ENCODE measurements at regions of chr19 and their contacts with region 1.

Region 1: DNA sequence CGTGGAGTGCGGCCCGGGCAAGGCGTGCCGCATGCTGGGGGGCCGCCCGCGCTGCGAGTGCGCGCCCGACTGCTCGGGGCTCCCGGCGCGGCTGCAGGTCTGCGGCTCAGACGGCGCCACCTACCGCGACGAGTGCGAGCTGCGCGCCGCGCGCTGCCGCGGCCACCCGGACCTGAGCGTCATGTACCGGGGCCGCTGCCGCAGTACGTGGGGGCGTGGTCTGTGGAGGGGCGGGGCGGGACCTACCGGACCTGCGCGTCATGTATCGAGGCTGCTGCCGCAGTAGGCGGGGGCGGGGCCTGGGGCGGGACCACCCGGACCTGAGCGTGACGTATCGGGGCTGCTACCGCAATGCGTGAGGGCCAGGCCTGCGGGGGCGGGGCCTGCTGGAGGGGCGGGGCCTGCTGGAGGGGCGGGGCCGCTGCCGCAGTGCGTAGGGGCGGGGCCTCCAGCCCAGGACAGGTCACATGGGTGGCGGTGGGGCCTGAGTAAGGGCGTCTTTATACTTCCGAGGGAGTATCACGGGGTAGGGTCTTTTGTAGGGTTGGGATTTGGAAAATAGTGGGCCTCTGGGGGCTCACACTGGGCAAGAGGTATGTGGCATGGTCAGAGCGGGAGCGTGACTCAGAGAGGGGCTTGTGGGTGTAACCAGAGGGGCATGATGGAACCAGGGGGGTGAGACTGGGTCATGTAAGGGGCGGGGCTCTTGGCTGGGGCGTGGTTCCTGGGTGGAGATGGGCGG is 4.3 kb downstream of the FSTL3 start:
- DNase-seq: peak; percentile 99 to 100 (median 100)
- ATAC-seq: peak; percentile 79
- H3K4me3 ChIP-seq: peak overlapping the region; percentile 59 to 94
- H3K4me3 Mint-ChIP-seq: peak overlapping the region; percentile 91
- H3K27ac ChIP-seq: peak overlapping the region; percentile 73 to 88
- H3K27ac Mint-ChIP-seq: peak overlapping the region; percentile 97
- H3K4me1 ChIP-seq: peaks cover 20% of the 10 kb centered on the region
- H3K4me1 Mint-ChIP-seq: peaks cover 8% of the 10 kb centered on the region
- H3K27me3 ChIP-seq: peaks cover 0 to 16% of the 10 kb centered on the region in 2 experiments
- H3K27me3 Mint-ChIP-seq: peaks cover 4% of the 10 kb centered on the region
- CTCF ChIP-seq: peak; percentile 37

Region 2: DNA sequence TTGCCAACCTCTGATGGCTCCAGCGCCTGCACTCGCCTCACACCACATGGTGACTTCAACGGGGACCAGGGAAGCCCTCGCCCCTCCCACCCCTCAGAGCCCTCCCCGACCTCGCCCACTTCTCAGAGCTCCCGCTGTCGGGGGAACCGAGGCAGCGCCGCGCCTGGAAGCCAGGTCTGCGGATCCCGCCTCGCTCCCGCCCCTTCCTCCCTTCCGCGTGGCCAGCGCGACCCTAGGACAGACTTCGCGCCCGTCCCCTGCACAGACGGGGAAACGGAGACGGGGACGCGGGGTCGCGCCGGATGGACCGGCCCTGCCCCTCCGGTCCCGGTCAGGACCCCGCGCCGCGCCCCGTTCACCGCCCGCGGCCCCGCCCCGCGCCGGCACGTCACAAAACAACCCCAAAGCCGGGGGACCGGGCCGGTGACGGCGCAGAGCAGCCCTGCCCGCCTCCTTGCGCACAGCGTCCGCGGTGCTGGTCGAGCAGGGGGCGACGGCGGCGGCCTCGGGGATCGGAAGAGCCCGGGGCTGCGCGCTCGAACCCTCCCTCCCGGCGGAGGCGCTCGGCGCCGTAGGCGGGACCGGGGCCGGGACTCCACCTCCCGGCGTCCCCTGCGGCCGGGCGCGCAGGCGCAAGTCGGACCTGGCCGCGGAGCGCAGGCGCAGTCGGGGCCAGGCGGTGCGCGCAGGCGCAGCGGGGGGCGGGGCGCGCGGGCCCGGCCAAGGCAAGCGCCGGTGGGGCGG is 149.3 kb before region 1 on chr19:
- CTCF ChIA-PET with region 1: no interaction called
- POLR2A ChIA-PET with region 1: no interaction called
- intact Hi-C with region 1: loop called in 1 of 2 experiments (anchors 5 kb)
- DNase-seq: peak; percentile 79 to 93 (median 85)
- ATAC-seq: peak; percentile 80
- H3K4me3 ChIP-seq: peak overlapping the region; percentile 64 to 87
- H3K4me3 Mint-ChIP-seq: peak overlapping the region; percentile 82
- H3K27ac ChIP-seq: peak overlapping the region; percentile 73 to 74
- H3K27ac Mint-ChIP-seq: peak overlapping the region; percentile 87
- H3K4me1 ChIP-seq: peaks cover 20% of the 10 kb centered on the region
- H3K4me1 Mint-ChIP-seq: peaks cover 14% of the 10 kb centered on the region
- H3K27me3 ChIP-seq: no peaks in the 10 kb centered on the region
- H3K27me3 Mint-ChIP-seq: peaks cover 7% of the 10 kb centered on the region
- CTCF ChIP-seq: no peak

Region 3: DNA sequence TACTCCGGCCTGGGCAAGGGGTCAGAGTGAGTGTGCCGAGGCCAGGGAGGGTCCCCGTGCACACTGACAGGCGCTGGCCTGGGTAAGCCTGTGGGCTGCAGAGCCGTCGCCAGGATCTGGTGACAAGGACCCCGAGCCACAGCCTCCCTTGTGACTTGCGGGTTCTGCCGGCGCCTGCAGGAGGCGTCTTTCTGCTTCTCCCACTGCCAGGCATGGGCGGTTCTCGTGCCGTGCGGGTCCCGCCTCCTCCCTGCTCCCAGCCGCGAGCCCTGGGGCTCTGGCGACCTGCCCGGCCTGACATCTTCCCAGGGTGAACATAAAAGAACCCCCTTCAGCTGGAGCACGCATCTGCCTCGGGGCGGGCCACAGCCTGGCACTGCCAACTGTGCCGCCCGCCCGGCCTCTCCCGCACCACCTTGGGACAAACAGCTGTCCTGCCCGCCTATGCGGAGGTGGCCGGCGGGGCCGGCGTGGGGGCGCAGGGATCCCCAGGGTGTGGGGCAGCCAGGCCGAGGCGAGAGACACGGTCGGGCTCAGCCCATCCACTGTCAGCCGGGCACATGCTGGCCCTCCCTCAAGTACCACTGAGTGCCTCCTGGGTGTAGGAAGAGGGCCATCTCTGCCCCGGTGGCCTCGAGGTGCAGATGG is 92.2 kb before region 1 on chr19:
- CTCF ChIA-PET with region 1: interaction called, 5 read pairs
- POLR2A ChIA-PET with region 1: no interaction called
- intact Hi-C with region 1: loop called in 1 of 2 experiments (anchors 5 kb)
- DNase-seq: peak in 8 of 9 experiments; percentile 36 to 81 (median 68)
- ATAC-seq: peak; percentile 65
- H3K4me3 ChIP-seq: no peak overlapping the region
- H3K4me3 Mint-ChIP-seq: peak overlapping the region; percentile 37
- H3K27ac ChIP-seq: no peak overlapping the region
- H3K27ac Mint-ChIP-seq: no peak overlapping the region
- H3K4me1 ChIP-seq: peaks cover 26% of the 10 kb centered on the region
- H3K4me1 Mint-ChIP-seq: peaks cover 16% of the 10 kb centered on the region
- H3K27me3 ChIP-seq: peaks cover 11 to 38% of the 10 kb centered on the region in 2 experiments
- H3K27me3 Mint-ChIP-seq: peaks cover 15% of the 10 kb centered on the region
- CTCF ChIP-seq: peak; percentile 61

Region 4: DNA sequence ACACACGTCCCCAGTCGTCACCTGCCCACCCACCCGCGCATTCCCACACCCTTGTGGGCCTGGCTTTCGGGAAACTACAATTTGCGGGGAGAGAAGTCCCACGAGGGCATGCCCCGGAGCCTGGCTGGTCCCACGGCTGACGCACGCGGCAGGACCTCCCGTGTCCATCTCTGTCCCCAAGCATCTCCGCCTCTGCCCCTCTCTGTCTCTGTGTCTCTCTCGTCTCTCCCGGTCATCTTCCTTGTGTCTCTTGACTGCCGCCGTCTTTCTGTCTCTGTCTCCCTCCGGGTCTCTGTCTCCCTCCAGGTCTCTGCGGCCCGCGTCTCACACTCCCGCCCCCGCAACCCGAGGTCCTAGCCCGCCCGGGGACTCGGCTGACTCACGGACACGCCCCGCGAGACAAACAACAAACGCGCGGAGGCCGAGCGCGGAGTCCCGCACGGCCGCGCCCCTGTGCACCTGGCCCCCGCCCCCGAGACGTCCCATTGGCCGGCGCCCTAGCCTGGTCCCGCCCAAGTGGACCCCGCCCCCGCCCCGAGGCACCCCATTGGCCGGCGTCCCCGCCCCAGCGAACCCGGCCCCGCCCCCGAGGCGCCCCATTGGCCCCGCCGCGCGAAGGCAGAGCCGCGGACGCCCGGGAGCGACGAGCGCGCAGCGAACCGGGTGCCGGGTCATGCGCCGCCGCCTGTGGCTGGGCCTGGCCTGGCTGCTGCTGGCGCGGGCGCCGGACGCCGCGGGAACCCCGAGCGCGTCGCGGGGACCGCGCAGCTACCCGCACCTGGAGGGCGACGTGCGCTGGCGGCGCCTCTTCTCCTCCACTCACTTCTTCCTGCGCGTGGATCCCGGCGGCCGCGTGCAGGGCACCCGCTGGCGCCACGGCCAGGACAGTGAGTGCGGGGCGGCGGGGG is 41.0 kb before region 1 on chr19 and contains the start of gene FGF22:
- CTCF ChIA-PET with region 1: no interaction called
- POLR2A ChIA-PET with region 1: no interaction called
- intact Hi-C with region 1: loop called (anchors 1 kb)
- DNase-seq: peak; percentile 91 to 98 (median 96)
- ATAC-seq: peak; percentile 96
- H3K4me3 ChIP-seq: peak within 1 kb of the TSS; percentile 53 to 61
- H3K4me3 Mint-ChIP-seq: peak within 1 kb of the TSS; percentile 84
- H3K27ac ChIP-seq: peak within 1 kb of the TSS in 1 of 2 experiments; percentile 14
- H3K27ac Mint-ChIP-seq: peak within 1 kb of the TSS; percentile 93
- H3K4me1 ChIP-seq: peaks cover 13% of the 10 kb centered on the region
- H3K4me1 Mint-ChIP-seq: peaks cover 9% of the 10 kb centered on the region
- H3K27me3 ChIP-seq: no peaks in the 10 kb centered on the region
- H3K27me3 Mint-ChIP-seq: no peaks in the 10 kb centered on the region
- CTCF ChIP-seq: no peak
- total RNA-seq, gene FGF22: 0.65 to 0.97 TPM

Region 5: DNA sequence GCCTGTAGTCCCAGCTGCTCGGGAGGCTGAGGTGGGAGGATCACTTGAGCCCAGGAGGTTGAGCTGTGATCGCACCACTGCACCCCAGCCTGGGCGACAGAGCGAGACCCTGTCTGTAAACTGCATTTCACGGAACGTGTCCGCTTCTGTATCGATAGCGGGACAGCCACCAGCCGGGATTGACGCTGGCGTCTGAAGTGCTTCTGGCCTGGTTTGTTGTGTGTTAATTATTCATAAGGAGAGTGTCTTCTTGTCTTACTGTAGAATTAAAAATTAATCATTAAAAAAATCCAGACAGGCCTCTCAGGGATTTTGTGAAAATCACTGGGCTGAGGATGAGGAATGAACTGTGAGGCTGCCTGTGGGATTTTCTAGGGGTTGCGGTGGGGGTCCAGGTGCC is 54.3 kb after region 1 on chr19:
- CTCF ChIA-PET with region 1: interaction called, 3 read pairs
- POLR2A ChIA-PET with region 1: no interaction called
- intact Hi-C with region 1: loop called in 1 of 2 experiments (anchors 1 kb)
- DNase-seq: peak in 1 of 9 experiments; percentile 9
- ATAC-seq: no peak
- H3K4me3 ChIP-seq: no peak overlapping the region
- H3K4me3 Mint-ChIP-seq: no peak overlapping the region
- H3K27ac ChIP-seq: no peak overlapping the region
- H3K27ac Mint-ChIP-seq: no peak overlapping the region
- H3K4me1 ChIP-seq: no peaks in the 10 kb centered on the region
- H3K4me1 Mint-ChIP-seq: peaks cover 3% of the 10 kb centered on the region
- H3K27me3 ChIP-seq: no peaks in the 10 kb centered on the region
- H3K27me3 Mint-ChIP-seq: peaks cover 3% of the 10 kb centered on the region
- CTCF ChIP-seq: no peak

Region 6: DNA sequence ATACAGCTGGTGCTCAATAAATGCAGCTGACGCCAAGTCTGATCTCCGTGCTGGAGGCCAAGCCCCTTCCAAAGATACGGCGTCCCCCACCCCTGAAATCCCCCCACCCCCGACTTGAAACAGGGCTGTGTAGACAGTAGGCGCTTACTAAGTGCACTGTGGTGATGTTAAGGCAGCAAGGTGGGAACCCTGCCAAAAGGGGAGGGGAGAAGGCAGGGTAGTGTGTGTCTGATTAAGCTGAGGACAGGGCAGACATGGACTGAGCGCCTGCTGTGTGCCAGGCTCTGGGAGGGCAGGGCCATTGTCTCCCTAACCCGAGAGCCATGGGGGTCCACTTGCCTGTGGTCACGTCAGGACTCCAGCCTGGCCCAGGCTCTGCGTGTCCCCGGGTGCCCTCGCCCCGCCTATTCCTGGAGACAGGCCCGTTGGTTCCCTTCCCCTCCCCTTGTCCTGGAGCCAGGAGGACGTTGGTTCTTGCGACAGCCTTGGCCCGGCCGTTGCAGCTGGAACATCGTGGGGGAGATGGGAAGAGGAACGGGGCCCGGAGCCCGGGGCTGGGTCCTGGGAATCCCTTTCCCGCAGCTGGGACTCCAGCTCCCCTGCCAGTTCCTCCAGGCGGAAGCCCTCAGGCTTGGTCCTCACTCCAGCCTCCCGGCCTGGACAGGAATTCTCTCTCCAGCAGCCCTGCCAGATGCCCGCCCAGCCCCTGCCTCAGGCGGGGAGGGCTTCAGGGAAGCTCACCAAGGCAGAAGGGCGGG is 169.9 kb after region 1 on chr19:
- CTCF ChIA-PET with region 1: no interaction called
- POLR2A ChIA-PET with region 1: no interaction called
- intact Hi-C with region 1: no loop called
- DNase-seq: peak in 1 of 9 experiments; percentile 21
- ATAC-seq: no peak
- H3K4me3 ChIP-seq: no peak overlapping the region
- H3K4me3 Mint-ChIP-seq: no peak overlapping the region
- H3K27ac ChIP-seq: no peak overlapping the region
- H3K27ac Mint-ChIP-seq: no peak overlapping the region
- H3K4me1 ChIP-seq: no peaks in the 10 kb centered on the region
- H3K4me1 Mint-ChIP-seq: no peaks in the 10 kb centered on the region
- H3K27me3 ChIP-seq: peaks cover 0 to 16% of the 10 kb centered on the region in 2 experiments
- H3K27me3 Mint-ChIP-seq: peaks cover 27% of the 10 kb centered on the region
- CTCF ChIP-seq: no peak